Left ventricle myocardium superior (tissue), 1 donor: ENCODE measurements at regions of chr6 and their contacts with region 1.

Region 1: DNA sequence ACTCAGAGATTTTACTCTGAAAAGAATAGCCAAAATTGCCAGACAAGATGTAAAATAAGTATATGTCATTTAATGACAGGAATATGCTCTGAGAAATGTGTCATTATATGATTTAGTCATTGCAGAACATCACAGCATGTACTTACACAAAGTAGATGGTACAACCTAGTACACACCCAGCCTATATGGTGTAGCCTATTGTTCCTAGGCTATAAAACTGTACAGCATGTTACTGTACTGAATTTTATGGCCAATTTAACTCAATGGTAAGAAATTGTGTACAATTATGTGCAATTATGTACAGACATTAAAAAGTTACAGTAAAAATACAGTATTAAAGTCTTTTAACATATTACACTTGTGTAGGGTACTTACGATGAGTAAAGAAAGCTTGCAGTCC is 311.9 kb upstream of the EPHA7 start:
- DNase-seq: no peak
- ATAC-seq: no peak

Region 2: GRCh38 chr6:93575495-93576267 is 155.6 kb before region 1 on chr6:
- intact Hi-C with region 1: no loop called
- DNase-seq: no peak
- ATAC-seq: no peak

Region 3: DNA sequence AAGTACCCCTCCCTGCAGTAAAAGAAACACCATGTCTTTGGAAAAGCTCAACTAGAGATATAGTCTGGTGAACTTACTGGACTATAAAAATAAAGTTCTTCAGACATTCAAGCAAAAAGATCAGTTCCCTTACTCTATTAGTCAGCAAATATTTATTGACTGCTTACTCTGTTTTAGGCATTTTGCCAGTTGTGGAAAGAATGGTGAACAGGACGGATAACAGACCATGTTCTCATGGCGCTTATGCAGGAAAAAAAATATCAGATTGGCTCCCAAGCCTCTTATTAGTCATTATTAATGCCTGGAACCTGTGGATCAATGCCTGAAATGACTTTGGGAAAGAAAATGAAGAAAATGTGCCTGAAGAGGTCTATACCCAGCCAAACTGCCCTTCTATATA is 29.8 kb before region 1 on chr6:
- intact Hi-C with region 1: loop called (anchors 2 kb)
- DNase-seq: no peak
- ATAC-seq: no peak

Region 4: GRCh38 chr6:94027374-94027773 is 296.1 kb after region 1 on chr6:
- intact Hi-C with region 1: no loop called
- DNase-seq: no peak
- ATAC-seq: no peak

Region 5: DNA sequence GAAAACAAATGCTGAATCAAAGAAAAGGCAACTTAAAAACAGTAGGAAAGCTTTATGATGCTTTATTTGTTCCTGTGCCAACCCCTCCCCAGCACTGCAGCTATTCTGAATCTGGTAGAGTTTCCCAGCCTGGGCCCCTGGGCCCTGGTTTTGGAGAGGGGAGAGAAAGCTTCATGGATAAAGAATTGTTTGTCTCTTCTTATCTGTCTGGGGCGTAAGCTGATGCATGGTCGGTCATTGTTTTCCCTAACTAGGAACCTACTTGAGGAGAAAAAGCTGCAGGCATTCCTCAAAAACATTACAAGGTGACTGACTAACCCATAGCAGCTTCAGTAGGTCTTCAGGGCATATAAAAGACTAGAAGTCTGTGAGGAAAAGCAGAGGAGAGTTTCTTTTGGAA is 446.1 kb after region 1 on chr6:
- intact Hi-C with region 1: no loop called
- DNase-seq: no peak
- ATAC-seq: no peak